Heart right ventricle (tissue), 16 donors: ENCODE measurements at regions of chr12 and their contacts with region 1.

Region 1: DNA sequence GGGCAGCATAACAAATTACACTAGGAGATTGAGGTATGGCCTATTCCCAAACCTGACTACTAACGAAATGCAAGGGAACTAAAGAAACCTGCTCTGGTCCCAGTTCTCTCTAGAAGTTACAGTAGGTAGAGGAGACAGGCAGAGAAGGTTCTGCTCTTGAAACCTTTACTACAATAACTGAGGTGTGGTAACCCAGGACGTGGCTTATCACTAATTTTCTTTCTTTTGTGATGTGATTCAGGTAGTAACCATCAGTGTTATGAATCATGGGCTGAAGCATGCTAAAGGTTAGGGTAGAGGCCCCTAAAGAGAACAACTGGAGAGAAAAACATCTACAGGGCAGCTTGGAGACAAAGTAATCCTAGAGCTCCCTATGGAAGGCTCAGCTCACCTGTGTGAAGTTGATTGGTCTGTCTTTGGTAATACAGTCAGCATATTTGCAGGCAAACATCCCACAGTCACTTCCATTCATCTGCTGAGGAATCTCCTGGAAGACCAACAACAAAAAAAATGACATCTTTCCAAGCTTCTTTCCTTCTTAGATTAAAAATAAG is 41.8 kb upstream of the COL2A1 start:
- DNase-seq: no peak
- ATAC-seq: no peak
- H3K4me3 ChIP-seq: no peak overlapping the region
- H3K27ac ChIP-seq: no peak overlapping the region
- H3K4me1 ChIP-seq: no peaks in the 10 kb centered on the region
- H3K27me3 ChIP-seq: no peaks in the 10 kb centered on the region
- CTCF ChIP-seq: no peak

Region 2: DNA sequence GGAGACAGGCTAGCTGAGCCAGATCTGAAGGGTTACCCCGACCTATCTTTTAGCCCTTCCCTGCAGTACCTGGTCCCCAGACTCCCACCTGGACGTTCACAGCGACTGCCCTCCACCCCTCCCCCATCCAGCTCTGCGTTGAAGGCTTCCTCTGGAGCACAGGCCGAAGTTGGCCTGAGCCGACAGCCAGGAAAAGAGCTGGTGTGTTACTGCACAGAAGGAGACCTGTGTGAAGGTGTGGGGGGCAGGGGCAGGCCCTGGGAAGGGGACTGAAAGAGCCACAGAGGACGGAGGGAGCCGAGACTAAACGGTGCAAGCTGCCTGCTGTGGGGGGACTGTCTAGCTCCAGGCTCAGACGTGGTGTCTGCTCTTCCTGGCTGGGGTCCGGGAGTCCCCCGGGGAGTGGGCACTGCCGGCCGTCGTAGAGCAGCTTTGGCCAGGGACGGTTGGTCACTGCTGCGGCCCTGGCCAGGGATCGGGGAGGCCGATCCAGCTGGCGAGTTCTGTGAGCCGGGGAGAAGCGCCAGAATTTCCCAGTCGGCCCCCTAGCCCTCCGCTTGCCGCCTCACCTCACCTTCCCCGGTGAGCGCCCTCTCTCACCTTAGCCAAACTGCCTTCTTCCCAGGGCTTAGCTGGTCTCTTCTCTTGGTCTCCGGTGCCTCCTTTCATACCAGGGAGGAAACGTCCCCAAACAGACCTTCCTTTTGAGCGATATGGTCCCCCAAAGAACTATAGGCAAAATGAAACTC is 40.9 kb before region 1 on chr12:
- intact Hi-C with region 1: loop called in 1 of 10 experiments (anchors 5 kb)
- DNase-seq: no peak
- ATAC-seq: no peak
- H3K4me3 ChIP-seq: peak overlapping the region in 3 of 10 donors; percentile 34 to 50 (median 46)
- H3K27ac ChIP-seq: no peak overlapping the region
- H3K4me1 ChIP-seq: peaks cover 7 to 46% (median 43%) of the 10 kb centered on the region in 9 donors
- H3K27me3 ChIP-seq: peaks cover 16 to 92% (median 68%) of the 10 kb centered on the region in 7 donors
- CTCF ChIP-seq: no peak

Region 3: DNA sequence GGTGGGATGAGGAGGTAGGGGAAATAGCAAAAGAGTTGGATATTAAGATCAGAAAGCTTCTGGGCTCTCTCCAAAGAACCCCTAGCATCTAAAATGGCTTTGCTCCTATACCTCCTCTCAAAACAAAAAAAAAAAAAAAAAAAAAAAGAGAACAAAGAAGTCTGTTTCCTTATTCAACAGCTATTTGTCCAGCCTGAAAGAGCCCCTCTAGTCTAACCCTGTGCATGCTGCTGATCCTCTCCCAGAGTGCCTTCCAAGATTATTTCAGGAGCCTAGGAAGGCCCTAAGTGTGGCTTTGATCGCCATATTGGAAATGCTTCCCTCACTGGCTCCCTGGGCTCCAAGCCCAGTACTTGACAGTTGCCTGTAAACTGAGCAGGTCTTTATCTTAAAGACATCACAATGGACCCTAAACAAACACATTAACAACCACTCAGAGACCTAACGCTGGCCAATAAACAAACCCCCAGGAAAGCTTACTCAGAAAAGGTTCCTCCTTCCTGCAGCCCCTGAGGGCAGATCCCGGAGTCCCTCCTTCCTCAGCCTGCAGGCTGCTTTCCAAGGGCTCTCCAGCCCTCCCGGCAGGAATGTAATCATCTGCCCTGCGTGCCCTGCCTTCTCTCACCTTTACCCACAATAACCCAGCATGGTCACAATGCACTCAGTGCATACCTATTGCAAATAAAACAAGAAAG is 24.4 kb before region 1 on chr12:
- intact Hi-C with region 1: no loop called
- DNase-seq: no peak
- ATAC-seq: peak in 6 of 8 donors; percentile 35 to 68 (median 44)
- H3K4me3 ChIP-seq: no peak overlapping the region
- H3K27ac ChIP-seq: no peak overlapping the region
- H3K4me1 ChIP-seq: peaks cover 0 to 19% (median 5%) of the 10 kb centered on the region in 9 donors
- H3K27me3 ChIP-seq: peaks cover 0 to 41% (median 26%) of the 10 kb centered on the region in 7 donors
- CTCF ChIP-seq: no peak